ENCODE measurements at regions of chr5 and their contacts with region 1.

Region 1: GRCh38 chr5:4879693-4880303 is 260.3 kb upstream of the ADAMTS16 start:
- DNase-seq: peak; percentile 68 to 69
- ATAC-seq: peak; percentile 50 to 87 (median 74)
- H3K4me3 ChIP-seq: no peak overlapping the region
- H3K27ac ChIP-seq: no peak overlapping the region
- H3K4me1 ChIP-seq: no peaks in the 10 kb centered on the region
- H3K27me3 ChIP-seq: peaks cover 0 to 5% (median under 1%) of the 10 kb centered on the region in 7 donors
- CTCF ChIP-seq: peak; percentile 78 to 90 (median 84)

Region 2: DNA sequence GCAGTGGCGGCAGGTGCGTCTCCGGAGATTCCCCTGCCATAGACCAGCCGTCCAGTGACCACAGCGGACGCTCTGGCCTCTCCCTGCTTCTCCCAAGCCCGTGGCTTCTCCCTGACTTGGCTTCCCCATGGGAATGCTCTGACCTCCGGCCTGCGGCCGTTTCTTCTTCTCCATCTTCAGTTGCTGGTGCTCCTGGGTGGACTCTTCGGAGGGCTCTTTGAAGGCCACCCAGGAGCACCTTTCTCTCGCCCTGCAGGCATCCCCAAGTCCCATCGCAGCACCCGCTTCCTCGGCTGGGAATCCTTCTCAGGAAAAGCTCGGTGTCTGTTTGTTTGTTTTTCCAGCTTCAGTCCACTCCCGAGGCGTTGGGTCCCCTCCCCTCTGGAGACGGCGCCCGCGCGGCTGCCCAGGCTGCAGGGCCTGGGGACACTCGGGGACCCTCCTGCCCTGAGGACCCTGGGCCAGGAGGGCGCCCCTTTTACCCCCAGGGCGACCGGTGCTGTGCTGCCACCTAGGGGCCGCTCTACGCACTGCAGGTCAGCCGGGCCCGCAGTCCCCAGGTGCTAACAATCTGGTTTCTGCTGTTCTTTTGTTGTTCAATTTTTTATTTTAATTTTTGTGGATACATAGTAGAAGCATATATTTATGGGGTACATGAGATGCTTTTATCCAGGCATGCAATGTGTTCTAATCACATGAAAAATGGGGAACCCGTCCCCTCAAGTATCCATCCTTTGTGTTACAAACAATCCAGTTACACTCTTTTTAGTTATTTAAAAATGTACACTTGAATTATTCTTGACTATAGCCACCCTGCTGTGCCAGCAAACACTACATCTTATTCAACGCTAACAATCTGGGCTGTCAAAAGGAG is 62.4 kb after region 1 on chr5:
- intact Hi-C with region 1: loop called in 3 of 10 experiments (anchors 5 kb)
- DNase-seq: no peak
- ATAC-seq: peak in 2 of 8 donors; percentile 33 to 61
- H3K4me3 ChIP-seq: no peak overlapping the region
- H3K27ac ChIP-seq: no peak overlapping the region
- H3K4me1 ChIP-seq: no peaks in the 10 kb centered on the region
- H3K27me3 ChIP-seq: peaks cover 0 to 23% (median 2%) of the 10 kb centered on the region in 7 donors
- CTCF ChIP-seq: peak; percentile 38 to 87 (median 79)

Region 3: GRCh38 chr5:5141625-5142532 is 262.1 kb after region 1 on chr5:
- intact Hi-C with region 1: loop called in 2 of 10 experiments (anchors 5 to 10 kb)
- DNase-seq: peak in 1 of 2 donors; percentile 58
- ATAC-seq: no peak
- H3K4me3 ChIP-seq: peak overlapping the region in 1 of 10 donors; percentile 43
- H3K27ac ChIP-seq: no peak overlapping the region
- H3K4me1 ChIP-seq: peaks cover 0 to 23% (median 17%) of the 10 kb centered on the region in 9 donors
- H3K27me3 ChIP-seq: peaks cover 17 to 48% (median 32%) of the 10 kb centered on the region in 7 donors
- CTCF ChIP-seq: peak; percentile 66 to 86 (median 78)

Region 4: GRCh38 chr5:5158472-5158895 is 278.7 kb after region 1 on chr5:
- intact Hi-C with region 1: loop called in 1 of 10 experiments (anchors 10 kb)
- DNase-seq: no peak
- ATAC-seq: no peak
- H3K4me3 ChIP-seq: no peak overlapping the region
- H3K27ac ChIP-seq: no peak overlapping the region
- H3K4me1 ChIP-seq: peaks cover 0 to 7% (median 0%) of the 10 kb centered on the region in 9 donors
- H3K27me3 ChIP-seq: no peaks in the 10 kb centered on the region
- CTCF ChIP-seq: no peak

Region 5: DNA sequence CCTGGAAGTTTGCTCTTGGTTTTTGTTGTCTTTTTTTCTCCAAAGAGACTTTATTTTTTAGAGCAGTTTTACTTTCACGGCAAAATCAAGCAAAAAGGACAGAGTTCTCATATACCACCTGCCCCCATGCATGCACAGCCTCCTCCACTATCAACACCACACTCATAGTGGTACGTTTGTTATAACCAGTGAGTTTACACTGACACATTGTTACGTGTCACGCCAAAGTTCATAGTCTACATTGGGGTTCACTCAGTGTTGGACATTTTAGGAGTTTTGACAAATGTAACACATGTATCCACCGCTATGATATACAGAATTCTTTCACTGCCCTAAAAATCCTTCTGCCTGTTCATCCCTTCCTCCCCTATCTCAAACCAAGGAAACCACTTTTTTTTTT is 535.2 kb after region 1 on chr5:
- intact Hi-C with region 1: loop called in 9 of 10 experiments (anchors 2 to 10 kb)
- DNase-seq: no peak
- ATAC-seq: no peak
- H3K4me3 ChIP-seq: no peak overlapping the region
- H3K27ac ChIP-seq: no peak overlapping the region
- H3K4me1 ChIP-seq: peaks cover 0 to 12% (median 0%) of the 10 kb centered on the region in 9 donors
- H3K27me3 ChIP-seq: no peaks in the 10 kb centered on the region
- CTCF ChIP-seq: no peak

Region 6: DNA sequence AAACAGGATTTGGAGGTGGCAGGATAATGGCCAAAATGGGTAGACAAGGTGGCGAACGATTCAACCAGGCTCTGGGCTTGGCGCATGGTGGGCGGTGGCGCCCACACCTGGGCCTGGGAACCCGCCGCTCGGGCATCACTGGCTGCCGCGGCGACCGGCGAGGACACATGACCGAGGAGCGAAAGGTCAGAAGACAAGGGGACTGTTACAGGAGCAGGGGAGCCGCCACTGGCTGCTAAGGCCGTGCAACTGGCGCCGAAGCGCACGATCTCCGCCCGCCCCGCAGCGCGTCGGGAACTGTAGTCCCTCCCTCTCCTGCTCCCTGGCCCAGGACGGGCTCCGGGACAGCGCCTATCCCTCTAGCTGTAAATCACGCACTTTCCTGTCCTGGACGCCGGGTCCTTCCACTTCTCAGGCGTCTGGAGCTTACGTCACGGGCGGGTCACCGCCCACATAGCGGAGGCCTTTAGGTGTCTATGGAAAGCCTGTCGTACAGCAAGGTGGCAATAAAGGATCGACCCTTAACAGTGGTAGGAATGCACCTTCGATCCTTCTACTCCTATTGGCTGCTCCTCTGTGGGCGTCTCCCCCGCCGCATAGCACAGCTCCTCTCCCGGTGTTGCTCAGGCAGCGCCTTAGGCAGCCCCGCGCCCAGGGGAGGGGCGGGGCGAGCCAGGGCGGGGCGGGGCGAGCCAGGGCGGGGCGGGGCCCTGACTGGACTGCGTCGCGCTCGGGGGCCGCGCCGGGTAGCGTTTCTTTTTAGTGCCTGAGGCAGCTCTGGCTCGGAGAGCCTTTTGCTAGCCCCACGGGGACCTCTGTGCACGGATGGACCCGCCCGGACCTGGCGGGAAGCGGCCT is 542.4 kb after region 1 on chr5 and contains the start of gene ICE1:
- intact Hi-C with region 1: loop called in 7 of 10 experiments (anchors 2 to 10 kb)
- DNase-seq: peak; percentile 97 to 98
- ATAC-seq: peak; percentile 98 to 100 (median 99)
- H3K4me3 ChIP-seq: peak within 1 kb of the TSS; percentile 73 to 100 (median 94)
- H3K27ac ChIP-seq: peak within 1 kb of the TSS; percentile 82 to 99 (median 96)
- H3K4me1 ChIP-seq: peaks cover 9 to 62% (median 46%) of the 10 kb centered on the region in 9 donors
- H3K27me3 ChIP-seq: no peaks in the 10 kb centered on the region
- CTCF ChIP-seq: peak in 3 of 9 donors; percentile 15 to 26 (median 25)
- total RNA-seq, gene ICE1: 16.7 to 20.3 (median 18.6) TPM

Measured in heart right ventricle (tissue), 16 donors.